ENCODE measurements at regions of chr7 and their contacts with region 1.

Region 1: GRCh38 chr7:70040970-70041766 is 442.9 kb downstream of the AUTS2 start:
- DNase-seq: no peak
- H3K4me3 ChIP-seq: no peak overlapping the region
- H3K27ac ChIP-seq: no peak overlapping the region
- H3K4me1 ChIP-seq: no peaks in the 10 kb centered on the region
- H3K27me3 ChIP-seq: no peaks in the 10 kb centered on the region
- CTCF ChIP-seq: no peak

Region 2: GRCh38 chr7:70060298-70061068 is 19.3 kb after region 1 on chr7:
- CTCF ChIA-PET with region 1: no interaction called
- dilution Hi-C with region 1: no loop called
- in situ Hi-C with region 1: no loop called
- intact Hi-C with region 1: no loop called
- DNase-seq: no peak
- H3K4me3 ChIP-seq: no peak overlapping the region
- H3K27ac ChIP-seq: no peak overlapping the region
- H3K4me1 ChIP-seq: no peaks in the 10 kb centered on the region
- H3K27me3 ChIP-seq: no peaks in the 10 kb centered on the region
- CTCF ChIP-seq: no peak

Region 3: GRCh38 chr7:70156057-70156456 is 114.9 kb after region 1 on chr7:
- CTCF ChIA-PET with region 1: no interaction called
- dilution Hi-C with region 1: no loop called
- in situ Hi-C with region 1: no loop called
- intact Hi-C with region 1: loop called (anchors 1 kb)
- DNase-seq: no peak
- H3K4me3 ChIP-seq: no peak overlapping the region
- H3K27ac ChIP-seq: no peak overlapping the region
- H3K4me1 ChIP-seq: no peaks in the 10 kb centered on the region
- H3K27me3 ChIP-seq: no peaks in the 10 kb centered on the region
- CTCF ChIP-seq: no peak

Region 4: GRCh38 chr7:70165477-70166170 is 124.5 kb after region 1 on chr7:
- CTCF ChIA-PET with region 1: interaction called, 11 read pairs
- dilution Hi-C with region 1: no loop called
- in situ Hi-C with region 1: no loop called
- intact Hi-C with region 1: loop called (anchors 1 kb)
- DNase-seq: no peak
- H3K4me3 ChIP-seq: no peak overlapping the region
- H3K27ac ChIP-seq: no peak overlapping the region
- H3K4me1 ChIP-seq: no peaks in the 10 kb centered on the region
- H3K27me3 ChIP-seq: no peaks in the 10 kb centered on the region
- CTCF ChIP-seq: no peak

Region 5: GRCh38 chr7:70434376-70434775 is 393.2 kb after region 1 on chr7:
- CTCF ChIA-PET with region 1: no interaction called
- dilution Hi-C with region 1: no loop called
- in situ Hi-C with region 1: no loop called
- intact Hi-C with region 1: loop called (anchors 5 kb)
- DNase-seq: no peak
- H3K4me3 ChIP-seq: no peak overlapping the region
- H3K27ac ChIP-seq: no peak overlapping the region
- H3K4me1 ChIP-seq: no peaks in the 10 kb centered on the region
- H3K27me3 ChIP-seq: peaks cover 3% of the 10 kb centered on the region
- CTCF ChIP-seq: peak; percentile 7 to 59

Measured in mammary epithelial cell (primary cell).